ENCODE measurements at regions of chr10 and their contacts with region 1.

Region 1: GRCh38 chr10:59808896-59809643 is 55.8 kb upstream of the MRLN start:
- DNase-seq: peak; percentile 56
- H3K4me3 Mint-ChIP-seq: no peak overlapping the region
- H3K27ac Mint-ChIP-seq: no peak overlapping the region
- H3K4me1 Mint-ChIP-seq: peaks cover 5% of the 10 kb centered on the region
- H3K27me3 Mint-ChIP-seq: no peaks in the 10 kb centered on the region

Region 2: GRCh38 chr10:59709395-59710125 is 99.5 kb before region 1 on chr10 and contains the start of gene SLC16A9:
- intact Hi-C with region 1: loop called (anchors 5 kb)
- DNase-seq: peak; percentile 67
- H3K4me3 Mint-ChIP-seq: peak within 1 kb of the TSS; percentile 77
- H3K27ac Mint-ChIP-seq: peak within 1 kb of the TSS; percentile 75
- H3K4me1 Mint-ChIP-seq: peaks cover 10% of the 10 kb centered on the region
- H3K27me3 Mint-ChIP-seq: peaks cover 46% of the 10 kb centered on the region
- total RNA-seq, gene SLC16A9: 4.2 and 5.4 TPM in 2 replicates

Region 3: GRCh38 chr10:59847326-59847725 is 38.3 kb after region 1 on chr10:
- intact Hi-C with region 1: no loop called
- DNase-seq: no peak
- H3K4me3 Mint-ChIP-seq: no peak overlapping the region
- H3K27ac Mint-ChIP-seq: no peak overlapping the region
- H3K4me1 Mint-ChIP-seq: peaks cover 28% of the 10 kb centered on the region
- H3K27me3 Mint-ChIP-seq: no peaks in the 10 kb centered on the region

Measured in activated T-helper 1 cell treated with anti-CD3 and anti-CD28 coated beads, Interleukin-12 subunit alpha, Interleukin-12 subunit beta, Interleukin-2, Interleukin-4 antibody, amounts not matched to agents 30 ng/mL and 10 ng/mL and 1 ng/mL, durations not matched to agents 14 hours and 24 hours and 36 hours (primary cell).